ENCODE measurements at regions of chr2 and their contacts with region 1.

Region 1: GRCh38 chr2:224650815-224651439 is 65.2 kb downstream of the CCDC195 start:
- DNase-seq: peak; percentile 58
- CTCF ChIP-seq: peak; percentile 62

Region 2: GRCh38 chr2:224778474-224778877 is 127.5 kb after region 1 on chr2:
- in situ Hi-C with region 1: loop called (anchors 10 kb)
- DNase-seq: peak; percentile 63
- CTCF ChIP-seq: peak; percentile 83

Region 3: GRCh38 chr2:225231900-225232299 is 581.0 kb after region 1 on chr2:
- in situ Hi-C with region 1: no loop called
- DNase-seq: no peak
- CTCF ChIP-seq: no peak

Region 4: GRCh38 chr2:225608136-225608535 is 957.2 kb after region 1 on chr2:
- in situ Hi-C with region 1: no loop called
- DNase-seq: no peak
- CTCF ChIP-seq: no peak

Measured in GM13976 (cell line).